ENCODE measurements at regions of chr17 and their contacts with region 1.

Region 1: GRCh38 chr17:19362277-19363113 is at the start of gene B9D1:
- DNase-seq: peak; percentile 99
- CTCF ChIP-seq: peak; percentile 97

Region 2: DNA sequence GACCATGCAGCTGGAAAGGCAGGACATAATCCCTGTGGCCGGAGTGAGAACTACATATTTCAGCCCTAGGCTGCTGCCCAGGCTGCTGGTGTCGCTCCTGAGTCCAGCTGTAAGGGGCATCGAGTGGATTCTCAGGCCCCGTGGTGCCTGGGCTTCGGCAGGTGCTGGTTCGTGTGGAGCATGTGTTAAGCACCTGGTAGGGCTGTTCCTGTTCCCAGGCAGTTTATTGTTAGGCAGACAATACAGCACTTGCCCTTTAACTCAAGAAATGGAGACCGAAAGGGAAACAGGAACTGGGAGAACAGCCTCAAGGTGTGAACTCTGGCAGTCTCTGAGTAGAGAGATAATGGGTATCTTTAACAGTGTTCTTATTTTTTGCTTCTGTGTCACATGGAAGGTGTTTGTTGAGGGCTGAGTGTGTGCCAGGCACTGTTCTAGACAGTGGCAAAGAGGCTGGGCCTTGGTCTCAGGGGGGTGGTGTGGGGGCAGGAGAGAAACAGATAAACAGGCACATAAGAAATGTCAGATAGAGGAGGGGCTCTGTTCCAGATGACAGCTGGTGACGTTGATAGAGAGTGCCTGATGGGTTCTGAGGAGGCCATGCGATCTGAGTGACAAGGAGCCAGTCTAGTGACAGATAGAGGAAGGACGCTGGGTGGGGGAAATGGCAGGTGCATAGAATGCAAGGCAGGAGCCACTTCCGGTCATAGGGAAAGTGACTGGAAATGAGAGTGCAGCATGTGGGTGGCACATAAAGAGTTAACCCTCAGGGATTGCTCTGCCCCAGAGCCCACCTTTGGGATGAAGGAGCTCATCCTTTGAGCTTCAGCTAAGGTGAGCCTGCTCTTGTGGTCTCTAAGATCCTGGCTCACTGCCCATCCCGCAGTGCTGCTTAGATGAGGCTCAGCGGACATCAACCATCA is 91.5 kb before region 1 on chr17:
- CTCF ChIA-PET with region 1: no interaction called
- POLR2A ChIA-PET with region 1: no interaction called
- DNase-seq: peak; percentile 68
- CTCF ChIP-seq: no peak

Region 3: DNA sequence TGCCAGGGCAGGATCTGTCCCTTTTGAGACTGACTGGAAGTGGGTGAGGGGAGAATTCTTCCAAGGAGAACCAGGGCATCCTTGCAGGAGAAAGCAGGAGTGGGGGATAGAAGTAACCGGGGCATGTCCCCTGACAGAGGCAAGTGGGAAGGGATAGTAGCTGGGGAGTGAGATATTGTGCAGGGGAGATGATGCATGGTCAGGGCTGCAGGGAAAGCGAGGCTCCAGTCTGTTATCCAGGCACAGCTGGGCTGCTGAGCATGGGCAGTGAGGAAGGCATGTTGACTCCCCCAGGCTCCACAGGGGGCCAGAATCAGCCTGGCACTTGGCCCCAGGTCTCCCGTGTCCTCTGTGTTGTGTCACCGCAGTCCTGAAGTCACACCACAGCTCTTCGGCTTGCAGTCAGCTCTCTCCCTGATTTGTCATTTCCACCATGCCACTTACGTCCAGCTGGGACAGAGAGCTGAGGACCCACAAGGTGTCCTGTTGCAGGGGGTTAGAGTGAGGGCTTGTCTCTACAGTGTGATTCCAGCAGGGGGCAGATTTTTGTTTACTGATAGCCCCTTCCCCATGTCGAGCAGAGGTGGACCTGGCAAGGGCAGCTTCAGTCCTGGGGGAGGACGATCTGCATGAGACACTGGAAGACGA is 40.9 kb before region 1 on chr17:
- CTCF ChIA-PET with region 1: interaction called, 11 read pairs
- POLR2A ChIA-PET with region 1: no interaction called
- DNase-seq: no peak
- CTCF ChIP-seq: peak; percentile 4

Region 4: DNA sequence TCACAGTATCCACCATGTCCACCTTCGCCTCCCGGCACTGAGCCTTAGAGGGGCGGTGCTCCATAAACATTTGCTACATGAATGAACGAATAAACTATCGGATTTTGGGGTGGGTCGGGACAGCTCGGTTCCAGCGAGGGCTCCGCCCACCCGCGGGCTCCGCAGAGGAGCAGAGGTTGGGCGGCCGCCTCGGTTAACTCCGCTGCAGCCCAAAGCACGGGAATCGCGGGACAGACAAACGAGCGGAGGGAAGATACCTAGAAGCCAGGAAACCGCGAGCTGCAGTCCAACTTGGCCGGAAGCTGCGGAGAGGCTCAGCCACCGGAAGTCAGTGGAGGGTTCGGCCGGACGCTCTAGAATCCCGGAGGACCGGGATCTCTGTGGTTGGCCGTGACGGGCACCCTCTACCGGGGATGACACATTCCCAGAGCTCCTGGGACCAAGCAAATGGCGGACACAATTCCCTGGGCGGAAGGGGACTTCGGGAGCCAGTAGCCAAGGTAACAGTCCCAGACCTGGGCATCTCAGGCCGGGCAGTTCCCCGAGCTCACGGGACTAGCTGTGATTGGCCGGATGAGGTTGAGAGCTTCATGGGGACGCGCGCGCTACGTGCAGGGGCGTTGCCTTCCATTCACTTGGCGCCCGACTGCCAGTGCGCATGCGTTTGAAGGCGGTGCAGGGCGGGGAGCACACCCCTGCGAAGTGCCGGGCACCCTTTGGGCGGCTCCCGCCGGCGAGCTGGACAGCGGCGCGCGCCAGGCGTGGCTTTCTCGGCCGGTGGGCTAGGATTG is 15.3 kb after region 1 on chr17:
- CTCF ChIA-PET with region 1: interaction called, 121 read pairs
- POLR2A ChIA-PET with region 1: interaction called, 7 read pairs
- DNase-seq: peak; percentile 100
- CTCF ChIP-seq: peak; percentile 0

Region 5: GRCh38 chr17:19410875-19411620 is 48.6 kb after region 1 on chr17 and contains the start of gene RNF112:
- CTCF ChIA-PET with region 1: interaction called, 11 read pairs
- POLR2A ChIA-PET with region 1: no interaction called
- DNase-seq: no peak
- CTCF ChIP-seq: no peak

Region 6: GRCh38 chr17:19460700-19461099 is 98.2 kb after region 1 on chr17:
- CTCF ChIA-PET with region 1: interaction called, 19 read pairs
- POLR2A ChIA-PET with region 1: no interaction called
- DNase-seq: no peak
- CTCF ChIP-seq: no peak

Region 7: GRCh38 chr17:19558946-19559345 is 196.5 kb after region 1 on chr17:
- CTCF ChIA-PET with region 1: no interaction called
- POLR2A ChIA-PET with region 1: no interaction called
- DNase-seq: no peak
- CTCF ChIP-seq: no peak

Region 8: DNA sequence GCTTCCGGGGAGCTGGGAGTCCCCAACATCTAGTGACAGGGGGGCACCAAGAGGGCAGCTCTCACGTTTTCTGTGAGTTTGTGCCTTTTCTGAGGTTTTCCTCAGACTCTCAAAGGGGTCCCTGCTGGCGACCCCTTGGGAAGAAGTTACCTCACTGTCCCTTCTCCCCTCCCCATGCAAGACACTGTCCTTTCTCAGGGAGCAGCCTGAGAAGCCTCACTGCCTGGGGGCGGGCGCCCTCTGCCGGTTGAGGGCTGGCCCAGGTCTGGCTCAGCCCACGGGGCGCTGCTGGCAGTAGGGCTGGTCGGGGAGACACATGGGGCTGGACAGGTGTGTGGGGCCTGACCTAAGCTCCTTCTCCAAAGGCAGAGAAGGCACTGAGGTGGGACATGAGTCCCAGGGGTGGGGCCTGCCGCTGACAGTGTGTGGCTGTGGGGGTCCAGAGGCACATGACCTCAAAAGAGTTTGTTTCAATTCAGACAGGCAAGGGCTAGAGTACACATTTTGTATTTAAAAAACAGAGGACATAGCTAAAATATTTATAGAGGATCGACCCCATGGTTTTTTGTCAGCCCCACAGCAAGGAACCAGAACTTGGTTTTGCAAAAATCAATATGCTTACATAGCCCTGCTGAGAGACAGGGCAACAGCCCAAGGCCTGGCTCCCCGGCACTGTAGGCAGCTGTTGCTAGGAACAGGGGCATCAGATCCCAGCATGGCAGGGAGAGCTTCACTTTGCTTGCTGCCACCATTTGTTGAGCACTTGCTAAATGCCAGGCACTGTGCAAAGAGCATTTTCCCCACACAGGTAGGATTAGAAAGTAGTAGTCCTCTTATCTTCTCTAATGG is 404.2 kb after region 1 on chr17:
- CTCF ChIA-PET with region 1: interaction called, 69 read pairs
- POLR2A ChIA-PET with region 1: no interaction called
- DNase-seq: peak; percentile 87
- CTCF ChIP-seq: peak; percentile 99